HCT116 (cell line): ENCODE measurements at regions of chr19 and their contacts with region 1.

Region 1: GRCh38 chr19:34241513-34242337 is 12.6 kb upstream of the GARRE1 start:
- DNase-seq: no peak
- ATAC-seq: peak; percentile 98
- H3K4me3 ChIP-seq: no peak overlapping the region
- H3K27ac ChIP-seq: no peak overlapping the region
- H3K4me1 ChIP-seq: peaks cover 9 to 18% of the 10 kb centered on the region in 2 experiments
- H3K27me3 ChIP-seq: no peaks in the 10 kb centered on the region
- CTCF ChIP-seq: peak; percentile 33 to 76 (median 72); a peak in 5 of 6 replicates
- POLR2A ChIP-seq: no peak
- RAD21 ChIP-seq: peak; percentile 38; the same call in 1 of the 2 replicates

Region 2: GRCh38 chr19:34336781-34337271 is 95.1 kb after region 1 on chr19:
- CTCF ChIA-PET with region 1: interaction called, 3 read pairs
- POLR2A ChIA-PET with region 1: no interaction called
- RAD21 ChIA-PET with region 1: interaction called in 1 of 2 experiments, 4 read pairs
- intact Hi-C with region 1: loop called (anchors 5 kb)
- DNase-seq: peak; percentile 8
- ATAC-seq: no peak
- H3K4me3 ChIP-seq: no peak overlapping the region
- H3K27ac ChIP-seq: no peak overlapping the region
- H3K4me1 ChIP-seq: peaks cover 0 to 4% of the 10 kb centered on the region in 2 experiments; a peak in 1 of 4 replicates
- H3K27me3 ChIP-seq: no peaks in the 10 kb centered on the region
- CTCF ChIP-seq: peak; percentile 38 to 73 (median 51); a peak in 5 of 6 replicates
- POLR2A ChIP-seq: no peak
- RAD21 ChIP-seq: peak; percentile 47

Region 3: DNA sequence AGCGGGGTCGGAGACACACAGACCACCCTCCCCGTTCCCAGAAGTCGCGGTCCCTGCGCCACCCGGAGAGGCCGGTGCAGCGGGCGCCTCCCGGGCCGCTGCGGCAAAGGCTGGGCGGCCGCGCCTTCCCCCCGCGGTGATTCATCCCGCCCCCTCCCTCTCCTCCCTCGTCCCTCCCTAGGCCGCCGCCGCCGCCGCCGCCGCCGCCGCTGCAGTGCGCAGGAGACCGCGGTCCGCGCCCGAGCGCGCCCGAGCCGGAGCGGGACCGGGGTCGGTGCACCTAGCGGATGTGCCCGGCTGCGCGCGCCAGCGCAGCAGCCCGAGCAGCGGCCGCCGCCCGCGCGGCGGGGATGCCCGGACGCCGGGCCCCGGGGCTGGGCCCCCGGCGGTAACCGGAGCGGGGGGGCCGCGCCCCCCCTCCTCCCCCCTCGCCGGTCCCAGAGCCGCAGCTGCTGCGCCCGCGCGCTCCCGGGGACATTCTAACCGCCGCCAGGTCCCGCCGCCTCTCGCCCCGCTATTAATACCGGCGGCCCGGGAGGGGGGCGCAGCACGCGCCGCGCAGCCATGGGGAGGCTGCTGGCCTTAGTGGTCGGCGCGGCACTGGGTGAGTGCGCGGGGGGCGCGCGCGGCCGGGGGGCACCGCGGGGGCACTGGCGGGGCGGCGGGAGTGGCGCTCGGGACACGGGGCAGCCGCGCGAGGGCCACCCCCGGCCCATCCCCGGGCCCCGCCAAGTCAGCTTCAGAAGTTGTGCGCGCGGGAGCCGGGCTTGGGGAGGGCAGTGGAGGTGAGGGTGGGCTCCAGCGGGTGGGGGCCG is 788.7 kb after region 1 on chr19 and contains the start of gene SCN1B:
- CTCF ChIA-PET with region 1: no interaction called
- POLR2A ChIA-PET with region 1: no interaction called
- RAD21 ChIA-PET with region 1: no interaction called
- intact Hi-C with region 1: no loop called
- DNase-seq: peak; percentile 22
- ATAC-seq: peak; percentile 82
- H3K4me3 ChIP-seq: peak within 1 kb of the TSS; percentile 43 to 57
- H3K27ac ChIP-seq: peak within 1 kb of the TSS; percentile 43; the same call in 1 of the 2 replicates
- H3K4me1 ChIP-seq: peaks cover 9 to 27% of the 10 kb centered on the region in 2 experiments; a peak in 3 of 4 replicates
- H3K27me3 ChIP-seq: no peaks in the 10 kb centered on the region
- CTCF ChIP-seq: no peak
- POLR2A ChIP-seq: no peak
- RAD21 ChIP-seq: no peak
- total RNA-seq, gene SCN1B: 6.6 TPM